ENCODE measurements at regions of chr13 and their contacts with region 1.

Region 1: GRCh38 chr13:112587212-112587763 is 665 bp downstream of the TUBGCP3 start:
- DNase-seq: peak; percentile 58
- ATAC-seq: peak; percentile 59
- H3K4me3 Mint-ChIP-seq: peak overlapping the region; percentile 94
- H3K27ac Mint-ChIP-seq: peak overlapping the region; percentile 84
- H3K4me1 Mint-ChIP-seq: peaks cover 44% of the 10 kb centered on the region
- H3K27me3 Mint-ChIP-seq: peaks cover 4% of the 10 kb centered on the region
- CTCF ChIP-seq: no peak

Region 2: DNA sequence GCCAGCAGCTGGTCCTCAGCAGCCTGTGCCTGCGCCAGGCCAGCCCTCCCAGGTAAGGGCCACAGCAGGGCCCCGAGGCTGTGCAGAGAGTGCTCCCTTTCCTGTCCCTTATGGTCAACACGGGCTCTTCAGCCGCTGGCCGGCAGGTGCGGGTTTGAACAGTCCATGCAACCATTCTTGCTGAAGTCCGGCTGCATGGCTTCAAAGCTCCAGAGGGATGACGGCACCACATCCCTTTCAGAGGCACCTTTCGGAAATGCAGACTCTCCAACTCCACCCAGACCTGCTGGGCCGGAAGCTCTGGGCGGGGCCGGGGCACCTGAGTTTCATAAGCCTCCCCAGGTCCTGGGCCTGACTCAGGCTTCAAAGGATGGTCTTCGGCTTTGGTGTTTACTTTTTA is 129.8 kb before region 1 on chr13:
- CTCF ChIA-PET with region 1: no interaction called
- POLR2A ChIA-PET with region 1: no interaction called
- intact Hi-C with region 1: no loop called
- DNase-seq: no peak
- ATAC-seq: no peak
- H3K4me3 Mint-ChIP-seq: no peak overlapping the region
- H3K27ac Mint-ChIP-seq: no peak overlapping the region
- H3K4me1 Mint-ChIP-seq: no peaks in the 10 kb centered on the region
- H3K27me3 Mint-ChIP-seq: no peaks in the 10 kb centered on the region
- CTCF ChIP-seq: no peak

Region 3: DNA sequence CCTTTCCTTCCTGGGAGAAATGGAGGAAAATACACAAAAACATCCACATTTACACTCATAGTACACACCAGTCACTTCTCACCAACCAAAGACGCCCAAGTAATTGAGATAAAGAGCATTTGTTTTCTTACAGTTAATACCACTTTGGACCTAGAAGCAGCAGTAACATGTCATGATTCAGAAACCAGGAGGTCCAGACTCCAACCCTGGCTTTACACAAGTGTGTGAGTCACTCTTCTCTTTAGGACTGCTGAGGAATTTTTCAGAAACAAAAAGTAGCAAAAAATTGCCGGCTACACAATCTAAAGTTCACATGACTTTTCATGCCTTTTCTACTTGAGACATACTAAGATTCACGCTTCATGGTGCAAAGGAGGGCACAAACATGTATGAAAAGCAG is 41.4 kb before region 1 on chr13:
- CTCF ChIA-PET with region 1: no interaction called
- POLR2A ChIA-PET with region 1: no interaction called
- intact Hi-C with region 1: loop called (anchors 5 kb)
- DNase-seq: no peak
- ATAC-seq: no peak
- H3K4me3 Mint-ChIP-seq: no peak overlapping the region
- H3K27ac Mint-ChIP-seq: no peak overlapping the region
- H3K4me1 Mint-ChIP-seq: no peaks in the 10 kb centered on the region
- H3K27me3 Mint-ChIP-seq: no peaks in the 10 kb centered on the region
- CTCF ChIP-seq: no peak

Measured in activated B cell treated with CpG ODN at 0.5 μM for 24 hours (primary cell).